OCI-LY7 (cell line): ENCODE measurements at regions of chr1 and their contacts with region 1.

Region 1: DNA sequence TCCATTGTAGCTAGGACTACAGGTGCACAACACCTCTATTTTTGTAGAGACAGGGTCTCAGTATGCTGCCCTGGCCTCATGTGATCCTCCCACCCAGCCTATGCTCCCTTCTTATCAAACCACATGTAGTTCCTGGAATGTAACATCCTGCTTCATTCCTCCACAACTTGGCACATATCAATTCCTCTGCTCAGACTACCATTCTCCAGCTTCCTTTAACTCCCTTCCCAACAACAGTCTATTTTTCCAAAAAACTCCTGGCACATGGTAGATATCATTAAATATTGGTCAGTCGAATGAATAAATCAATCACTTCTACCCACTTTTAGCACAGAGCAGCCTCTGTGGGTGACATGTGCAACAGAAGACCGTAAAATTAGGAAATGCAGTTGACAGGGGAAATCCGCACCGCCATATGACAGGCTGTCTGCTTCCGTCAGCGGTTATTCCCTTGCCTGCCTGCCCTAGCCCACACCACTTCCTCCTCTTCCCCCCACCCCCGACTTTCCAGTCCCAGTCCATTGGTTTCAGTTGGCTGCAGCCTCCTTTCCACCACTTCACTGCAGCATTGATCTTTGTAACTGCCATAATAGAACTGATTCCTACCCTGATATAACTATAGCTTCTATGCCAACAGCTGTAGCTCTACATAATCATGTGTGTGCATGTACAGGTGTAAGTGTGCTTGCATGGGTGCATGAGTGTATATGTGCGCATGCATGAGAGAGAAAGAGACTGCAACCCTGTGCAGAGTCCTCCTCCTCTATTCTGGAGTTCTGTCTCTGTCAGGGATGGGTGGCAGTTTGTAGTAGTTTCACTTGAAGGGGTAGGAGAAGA is 6.8 kb upstream of the AKR1A1 start:
- DNase-seq: peak; percentile 46
- H3K4me3 ChIP-seq: peak overlapping the region; percentile 12
- H3K27ac ChIP-seq: peak overlapping the region; percentile 51
- H3K4me1 ChIP-seq: peaks cover 25% of the 10 kb centered on the region
- CTCF ChIP-seq: no peak

Region 2: GRCh38 chr1:45530632-45531135 is 13.1 kb before region 1 on chr1:
- CTCF ChIA-PET with region 1: no interaction called
- POLR2A ChIA-PET with region 1: interaction called, 10 read pairs
- intact Hi-C with region 1: no loop called
- DNase-seq: no peak
- H3K4me3 ChIP-seq: no peak overlapping the region
- H3K27ac ChIP-seq: no peak overlapping the region
- H3K4me1 ChIP-seq: no peaks in the 10 kb centered on the region
- CTCF ChIP-seq: no peak